ENCODE measurements at regions of chr4 and their contacts with region 1.

Region 1: DNA sequence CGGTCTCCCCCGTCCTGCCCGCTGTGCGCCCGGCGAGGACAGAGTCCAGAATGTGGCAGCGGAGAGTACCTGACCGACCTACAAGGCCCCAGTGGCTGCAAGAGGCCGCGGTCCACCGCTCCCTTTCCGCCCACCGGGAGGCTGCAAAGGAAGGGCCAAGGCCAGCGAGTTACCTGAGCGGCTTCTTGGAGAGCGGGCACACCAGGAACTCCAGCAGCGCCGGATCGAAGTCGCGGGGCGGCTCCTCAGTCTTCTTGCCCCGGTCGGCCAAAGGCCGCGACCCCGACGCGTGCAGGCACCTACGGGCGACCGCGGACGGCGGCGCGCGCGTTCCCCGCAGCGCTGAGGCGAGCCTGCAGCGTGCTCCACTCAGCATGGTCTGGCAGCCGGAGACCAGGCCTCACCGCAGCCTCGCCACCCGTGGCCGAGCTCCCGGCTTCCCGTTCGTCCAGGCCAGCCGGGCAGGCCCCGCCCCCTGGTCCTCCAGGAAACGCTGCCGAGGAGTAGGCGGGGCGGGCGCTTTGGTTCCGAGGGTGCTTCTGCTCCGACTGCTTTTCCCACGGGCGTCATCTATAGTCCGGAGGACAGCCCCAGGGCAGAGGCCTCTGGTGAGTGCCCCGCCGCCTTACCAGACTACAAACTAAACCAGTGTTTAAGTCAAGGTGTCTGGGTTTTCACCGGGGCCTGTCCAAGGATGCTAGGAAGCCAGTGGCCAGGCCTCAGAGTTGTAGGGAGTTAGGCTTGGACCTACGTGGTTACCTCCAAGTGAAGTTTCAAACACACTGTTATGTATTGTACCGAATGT is at the start of gene PYURF:
- DNase-seq: peak; percentile 27 to 80 (median 49)
- ATAC-seq: peak; percentile 76 to 80 (median 78)
- H3K4me3 ChIP-seq: peak within 1 kb of the TSS; percentile 86 to 88
- H3K4me3 Mint-ChIP-seq: peak within 1 kb of the TSS; percentile 90 to 93 (median 92)
- H3K27ac ChIP-seq: peak within 1 kb of the TSS; percentile 74
- H3K27ac Mint-ChIP-seq: peak within 1 kb of the TSS; percentile 88 to 90
- H3K4me1 ChIP-seq: peaks cover 12 to 20% of the 10 kb centered on the region in 2 experiments
- H3K4me1 Mint-ChIP-seq: peaks cover 27 to 42% (median 36%) of the 10 kb centered on the region in 3 donors
- H3K27me3 ChIP-seq: no peaks in the 10 kb centered on the region
- H3K27me3 Mint-ChIP-seq: no peaks in the 10 kb centered on the region
- total RNA-seq, gene PYURF: 39.9 to 60.7 (median 53.7) TPM

Region 2: DNA sequence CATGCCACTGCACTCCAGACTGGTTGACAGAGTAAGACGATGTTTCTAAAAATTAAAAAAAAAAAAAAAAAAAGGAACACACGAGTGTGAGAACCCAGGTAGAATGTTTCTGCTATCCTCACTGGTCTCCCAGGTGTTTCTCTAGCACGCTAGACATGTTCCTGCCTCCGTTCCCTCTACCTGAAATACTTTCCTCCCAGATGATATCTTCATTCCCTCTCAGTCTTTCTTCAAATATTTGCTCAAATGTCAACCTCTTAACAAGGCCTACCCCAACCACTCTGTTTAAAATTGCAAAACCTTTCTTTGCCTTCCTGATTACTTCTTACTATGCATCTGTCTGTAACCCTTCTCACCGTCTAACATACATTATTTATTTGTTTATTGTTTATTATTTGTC is 305.6 kb before region 1 on chr4:
- CTCF ChIA-PET with region 1: interaction called, 7 to 12 read pairs
- POLR2A ChIA-PET with region 1: no interaction called
- DNase-seq: no peak
- ATAC-seq: no peak
- H3K4me3 ChIP-seq: no peak overlapping the region
- H3K4me3 Mint-ChIP-seq: no peak overlapping the region
- H3K27ac ChIP-seq: no peak overlapping the region
- H3K27ac Mint-ChIP-seq: no peak overlapping the region
- H3K4me1 ChIP-seq: no peaks in the 10 kb centered on the region
- H3K4me1 Mint-ChIP-seq: peaks cover 3 to 10% (median 6%) of the 10 kb centered on the region in 3 donors
- H3K27me3 ChIP-seq: no peaks in the 10 kb centered on the region
- H3K27me3 Mint-ChIP-seq: peaks cover 0 to 2% of the 10 kb centered on the region in 2 donors

Region 3: GRCh38 chr4:88659055-88659889 is 135.7 kb after region 1 on chr4:
- CTCF ChIA-PET with region 1: interaction called, 11 to 27 read pairs
- POLR2A ChIA-PET with region 1: no interaction called
- DNase-seq: peak in 30 of 35 experiments; percentile 3 to 64 (median 22)
- ATAC-seq: peak; percentile 64 to 82 (median 73)
- H3K4me3 ChIP-seq: no peak overlapping the region
- H3K4me3 Mint-ChIP-seq: no peak overlapping the region
- H3K27ac ChIP-seq: no peak overlapping the region
- H3K27ac Mint-ChIP-seq: peak overlapping the region; percentile 4 to 46
- H3K4me1 ChIP-seq: no peaks in the 10 kb centered on the region
- H3K4me1 Mint-ChIP-seq: peaks cover 10 to 23% (median 14%) of the 10 kb centered on the region in 3 donors
- H3K27me3 ChIP-seq: no peaks in the 10 kb centered on the region
- H3K27me3 Mint-ChIP-seq: no peaks in the 10 kb centered on the region

Region 4: DNA sequence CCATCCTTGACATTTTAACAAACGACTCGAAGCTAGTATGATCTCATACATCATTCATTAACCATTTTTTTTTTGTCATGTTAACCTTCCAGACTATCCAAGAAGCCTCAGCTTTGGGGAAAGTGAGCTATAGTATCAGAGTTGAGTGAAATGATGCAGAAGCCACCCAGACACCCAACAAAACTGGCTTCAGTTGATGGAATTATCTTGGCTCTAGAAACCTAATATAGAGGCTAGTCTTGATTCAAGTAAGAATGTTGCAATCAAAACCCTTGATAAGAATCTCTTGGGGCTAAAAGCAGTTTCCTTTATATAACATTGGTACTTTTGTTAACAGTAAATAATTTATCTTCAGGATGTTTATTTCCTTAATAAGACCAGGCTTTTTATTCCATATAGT is 166.3 kb after region 1 on chr4:
- CTCF ChIA-PET with region 1: interaction called in 1 of 2 experiments, 12 read pairs
- POLR2A ChIA-PET with region 1: no interaction called
- DNase-seq: no peak
- ATAC-seq: no peak
- H3K4me3 ChIP-seq: no peak overlapping the region
- H3K4me3 Mint-ChIP-seq: no peak overlapping the region
- H3K27ac ChIP-seq: no peak overlapping the region
- H3K27ac Mint-ChIP-seq: no peak overlapping the region
- H3K4me1 ChIP-seq: no peaks in the 10 kb centered on the region
- H3K4me1 Mint-ChIP-seq: peaks cover 0 to 4% (median 0%) of the 10 kb centered on the region in 3 donors
- H3K27me3 ChIP-seq: no peaks in the 10 kb centered on the region
- H3K27me3 Mint-ChIP-seq: no peaks in the 10 kb centered on the region

Region 5: GRCh38 chr4:88991761-88992160 is 468.2 kb after region 1 on chr4:
- CTCF ChIA-PET with region 1: no interaction called
- POLR2A ChIA-PET with region 1: no interaction called
- DNase-seq: no peak
- ATAC-seq: no peak
- H3K4me3 ChIP-seq: no peak overlapping the region
- H3K4me3 Mint-ChIP-seq: no peak overlapping the region
- H3K27ac ChIP-seq: no peak overlapping the region
- H3K27ac Mint-ChIP-seq: no peak overlapping the region
- H3K4me1 ChIP-seq: no peaks in the 10 kb centered on the region
- H3K4me1 Mint-ChIP-seq: no peaks in the 10 kb centered on the region
- H3K27me3 ChIP-seq: no peaks in the 10 kb centered on the region
- H3K27me3 Mint-ChIP-seq: no peaks in the 10 kb centered on the region

Measured in T-cell (primary cell).